ENCODE measurements at regions of chr16 and their contacts with region 1.

Region 1: GRCh38 chr16:66894948-66895688 is 14.8 kb downstream of the PDP2 start:
- DNase-seq: peak; percentile 48 to 71
- ATAC-seq: peak; percentile 66 to 81 (median 78)
- H3K4me3 ChIP-seq: no peak overlapping the region
- H3K27ac ChIP-seq: peak overlapping the region in 4 of 10 donors; percentile 29 to 61 (median 48)
- H3K4me1 ChIP-seq: peaks cover 8 to 39% (median 22%) of the 10 kb centered on the region in 9 donors
- H3K27me3 ChIP-seq: no peaks in the 10 kb centered on the region
- CTCF ChIP-seq: peak; percentile 62 to 86 (median 83)

Region 2: DNA sequence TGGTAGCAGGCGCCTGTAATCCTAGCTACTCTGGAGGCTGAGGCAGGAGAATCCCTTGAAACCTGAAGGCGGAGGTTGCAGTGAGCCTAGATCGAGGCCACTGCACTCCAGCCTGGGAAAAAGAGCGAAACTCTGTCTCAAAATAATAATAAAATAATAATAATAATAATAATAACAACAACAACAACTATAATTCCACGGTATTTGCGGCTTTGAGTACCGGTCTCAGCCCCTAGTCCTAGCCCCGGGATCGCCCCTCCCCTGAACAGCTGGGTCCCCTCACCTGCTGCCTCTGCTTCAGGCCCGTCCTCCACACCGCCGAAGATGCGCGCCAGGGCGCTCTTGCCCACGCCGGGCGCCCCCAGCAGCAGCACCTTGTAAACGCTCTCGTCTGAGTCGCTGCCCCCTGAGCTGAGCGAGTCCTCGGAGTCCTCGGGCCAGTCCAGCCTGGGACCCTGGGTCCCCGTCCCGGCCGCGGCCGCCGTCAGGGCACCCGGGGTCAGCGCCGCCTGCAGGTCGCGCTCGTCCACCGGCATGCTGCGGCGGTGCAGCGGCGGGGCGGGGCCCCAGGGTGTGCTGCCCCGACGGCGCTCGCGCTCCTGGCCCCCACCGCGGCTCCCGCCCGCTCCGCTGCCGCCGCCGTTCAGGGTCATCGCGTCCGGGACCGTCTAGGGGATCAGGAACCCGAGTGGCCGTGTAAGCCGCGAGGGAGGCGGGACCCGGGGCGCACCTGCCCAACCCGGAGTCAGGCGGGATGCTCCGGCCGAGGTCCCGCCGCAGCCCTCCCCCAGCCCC is 29.6 kb after region 1 on chr16:
- intact Hi-C with region 1: loop called in 2 of 10 experiments (anchors 2 kb)
- DNase-seq: peak in 1 of 2 donors; percentile 62
- ATAC-seq: peak in 4 of 8 donors; percentile 11 to 18 (median 16)
- H3K4me3 ChIP-seq: peak overlapping the region; percentile 44 to 79 (median 68)
- H3K27ac ChIP-seq: peak overlapping the region; percentile 77 to 97 (median 90)
- H3K4me1 ChIP-seq: peaks cover 10 to 89% (median 39%) of the 10 kb centered on the region in 9 donors
- H3K27me3 ChIP-seq: peaks cover 0 to 63% (median 21%) of the 10 kb centered on the region in 7 donors
- CTCF ChIP-seq: peak in 7 of 9 donors; percentile 24 to 61 (median 34)

Region 3: DNA sequence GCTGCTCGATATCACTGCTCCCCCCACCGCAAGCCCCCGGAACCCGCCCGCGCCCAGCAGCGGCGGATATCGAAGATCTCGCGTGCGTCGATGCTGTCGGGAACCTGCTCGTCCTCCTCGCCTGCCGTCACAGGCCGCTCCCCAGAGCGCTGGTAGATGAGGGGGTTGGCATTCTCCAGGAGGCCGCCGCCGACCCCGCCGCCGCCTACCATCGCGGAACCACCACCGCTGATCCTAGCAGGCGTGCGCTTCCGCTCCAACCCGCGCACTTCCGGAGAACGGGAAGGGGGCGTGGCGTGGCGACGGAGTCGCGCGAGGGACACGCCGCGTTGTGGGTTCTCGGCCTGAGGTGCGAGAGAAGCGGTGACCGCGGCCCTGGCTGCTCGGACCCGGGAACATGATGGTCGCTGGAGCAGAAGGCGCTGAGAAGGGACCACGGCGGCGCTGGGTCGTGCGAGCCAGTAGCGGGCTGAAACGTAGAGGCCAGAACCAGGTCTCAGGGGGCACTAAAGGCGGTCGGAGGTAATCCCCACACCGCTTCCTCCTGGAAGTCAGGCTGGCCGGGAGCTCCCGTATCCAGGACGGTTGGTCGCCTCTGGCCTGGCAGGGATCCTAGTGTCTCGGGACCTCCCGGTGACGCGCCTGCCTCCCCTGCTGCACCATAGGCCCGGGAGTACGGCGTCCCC is 39.2 kb after region 1 on chr16 and contains the start of gene CIAO2B:
- intact Hi-C with region 1: loop called in 5 of 10 experiments (anchors 2 to 5 kb)
- DNase-seq: peak; percentile 90 to 92
- ATAC-seq: peak; percentile 81 to 94 (median 90)
- H3K4me3 ChIP-seq: peak within 1 kb of the TSS; percentile 62 to 99 (median 86)
- H3K27ac ChIP-seq: peak within 1 kb of the TSS; percentile 83 to 99 (median 95)
- H3K4me1 ChIP-seq: peaks cover 21 to 55% (median 42%) of the 10 kb centered on the region in 9 donors
- H3K27me3 ChIP-seq: no peaks in the 10 kb centered on the region
- CTCF ChIP-seq: no peak
- total RNA-seq, gene CIAO2B: 103 to 196 (median 111) TPM

Region 4: GRCh38 chr16:66947302-66948065 is 52.4 kb after region 1 on chr16:
- intact Hi-C with region 1: loop called in 3 of 10 experiments (anchors 5 to 10 kb)
- DNase-seq: peak; percentile 74 to 80
- ATAC-seq: peak; percentile 37 to 81 (median 76)
- H3K4me3 ChIP-seq: peak overlapping the region; percentile 16 to 74 (median 56)
- H3K27ac ChIP-seq: peak overlapping the region in 1 of 10 donors; percentile 20
- H3K4me1 ChIP-seq: peaks cover 0 to 26% (median 16%) of the 10 kb centered on the region in 9 donors
- H3K27me3 ChIP-seq: peaks cover 0 to 43% (median 12%) of the 10 kb centered on the region in 7 donors
- CTCF ChIP-seq: peak; percentile 65 to 91 (median 90)

Region 5: GRCh38 chr16:66954097-66954659 is 59.1 kb after region 1 on chr16:
- intact Hi-C with region 1: loop called in 4 of 10 experiments (anchors 2 to 10 kb)
- DNase-seq: peak; percentile 64 to 70
- ATAC-seq: peak in 7 of 8 donors; percentile 55 to 82 (median 76)
- H3K4me3 ChIP-seq: no peak overlapping the region
- H3K27ac ChIP-seq: no peak overlapping the region
- H3K4me1 ChIP-seq: peaks cover 0 to 4% (median 2%) of the 10 kb centered on the region in 9 donors
- H3K27me3 ChIP-seq: peaks cover 0 to 46% (median 10%) of the 10 kb centered on the region in 7 donors
- CTCF ChIP-seq: peak; percentile 63 to 83 (median 79)

Region 6: DNA sequence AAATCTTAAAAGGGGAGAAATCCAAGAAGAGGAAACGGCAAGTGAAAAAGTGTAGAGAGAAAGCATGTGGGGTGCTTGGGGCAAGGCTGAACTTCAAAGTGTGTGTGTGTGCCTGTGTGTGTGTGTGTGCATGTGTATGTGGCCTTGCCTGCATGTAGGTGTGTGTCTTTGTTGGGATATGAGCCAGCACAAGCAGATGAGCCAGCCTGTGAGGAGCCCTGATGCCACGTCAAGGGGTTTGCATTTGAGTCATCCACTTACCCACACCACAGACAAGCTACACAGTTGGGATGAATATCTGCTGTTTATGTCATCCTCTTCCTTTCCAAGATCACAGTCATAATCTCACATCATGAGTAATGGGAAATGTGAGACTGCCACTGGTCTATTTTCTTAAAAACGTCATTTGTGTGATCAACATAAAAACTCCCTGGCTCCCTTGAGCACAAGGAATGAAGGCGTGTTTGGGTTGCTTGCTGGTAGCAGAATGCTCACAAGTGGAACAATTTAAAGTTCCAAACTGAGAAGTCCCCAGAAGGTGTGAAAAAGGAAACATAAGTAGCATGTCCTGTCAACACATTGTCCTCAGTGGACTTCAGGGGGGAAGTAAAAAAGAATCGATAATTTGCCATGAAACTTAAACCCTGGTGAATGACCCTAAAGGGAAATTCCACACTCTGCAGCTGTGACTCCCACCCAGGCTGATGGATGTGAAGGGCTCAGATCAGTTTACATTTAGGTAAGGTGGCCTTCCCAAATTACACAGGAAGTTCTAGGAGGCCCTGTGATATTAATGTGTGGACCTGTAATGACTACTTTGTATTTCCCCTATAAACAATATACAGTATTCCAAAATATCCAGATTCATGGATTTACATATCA is 416.7 kb after region 1 on chr16:
- intact Hi-C with region 1: no loop called
- DNase-seq: peak in 1 of 2 donors; percentile 31
- ATAC-seq: peak; percentile 28 to 96 (median 76)
- H3K4me3 ChIP-seq: no peak overlapping the region
- H3K27ac ChIP-seq: peak overlapping the region in 2 of 10 donors; percentile 34 to 44
- H3K4me1 ChIP-seq: peaks cover 0 to 5% (median 0%) of the 10 kb centered on the region in 9 donors
- H3K27me3 ChIP-seq: peaks cover 0 to 12% (median 0%) of the 10 kb centered on the region in 7 donors
- CTCF ChIP-seq: no peak

Measured in heart right ventricle (tissue), 16 donors.